ENCODE measurements at regions of chr5 and their contacts with region 1.

Region 1: GRCh38 chr5:110738812-110739651 is at the start of gene SLC25A46:
- DNase-seq: peak; percentile 92
- ATAC-seq: peak; percentile 89
- H3K4me3 Mint-ChIP-seq: peak within 1 kb of the TSS; percentile 87
- H3K27ac Mint-ChIP-seq: peak within 1 kb of the TSS; percentile 91
- H3K4me1 Mint-ChIP-seq: peaks cover 17% of the 10 kb centered on the region
- H3K27me3 Mint-ChIP-seq: peaks cover 4% of the 10 kb centered on the region
- total RNA-seq, gene SLC25A46: 32.3 to 35.3 TPM

Region 2: DNA sequence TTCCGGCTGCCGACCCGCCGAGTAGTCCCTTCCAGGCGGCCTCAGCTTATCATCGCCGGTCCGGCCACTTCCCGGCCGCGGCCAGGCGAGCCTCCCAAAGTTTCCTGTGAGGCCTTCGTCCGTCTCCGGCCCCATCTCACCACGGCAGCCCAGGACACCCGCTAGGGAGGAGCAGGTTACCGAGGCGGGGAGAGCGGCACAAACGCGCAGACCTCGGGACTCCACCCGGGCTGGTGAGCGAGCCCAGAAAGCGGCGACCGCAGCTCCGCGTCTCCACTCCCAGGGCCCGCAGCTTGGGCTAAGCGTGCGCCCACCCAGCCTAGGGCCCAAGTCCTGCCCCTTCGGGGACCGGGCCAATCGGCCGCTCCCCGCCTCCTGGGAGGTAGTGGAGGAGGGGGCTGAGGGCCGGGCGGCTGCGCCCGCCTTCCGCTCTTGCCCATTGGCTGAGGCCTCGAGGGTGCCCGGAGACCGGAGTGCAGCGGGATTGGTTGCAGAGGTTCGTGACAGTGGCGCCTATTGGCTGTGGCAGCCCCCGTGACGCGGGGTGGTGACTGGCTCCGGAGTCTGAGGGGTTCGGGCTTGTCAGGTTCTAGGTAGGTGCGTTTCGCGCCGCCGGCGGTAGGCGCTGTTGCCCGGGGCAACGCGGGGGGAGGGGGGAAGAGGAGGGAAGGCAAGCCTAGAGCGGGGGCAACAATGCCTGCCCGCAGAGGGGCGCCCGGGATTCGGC is 1990.5 kb before region 1 on chr5:
- CTCF ChIA-PET with region 1: no interaction called
- POLR2A ChIA-PET with region 1: no interaction called
- intact Hi-C with region 1: loop called in 1 of 2 experiments (anchors 5 kb)
- DNase-seq: peak; percentile 98
- ATAC-seq: peak; percentile 98
- H3K4me3 Mint-ChIP-seq: peak overlapping the region; percentile 75
- H3K27ac Mint-ChIP-seq: peak overlapping the region; percentile 89
- H3K4me1 Mint-ChIP-seq: peaks cover 18% of the 10 kb centered on the region
- H3K27me3 Mint-ChIP-seq: no peaks in the 10 kb centered on the region

Region 3: GRCh38 chr5:110726249-110727024 is 12.6 kb before region 1 on chr5 and contains the start of gene TMEM232:
- CTCF ChIA-PET with region 1: interaction called, 6 read pairs
- POLR2A ChIA-PET with region 1: no interaction called
- intact Hi-C with region 1: loop called (anchors 1 kb)
- DNase-seq: peak; percentile 87
- ATAC-seq: peak; percentile 100
- H3K4me3 Mint-ChIP-seq: peak within 1 kb of the TSS; percentile 65
- H3K27ac Mint-ChIP-seq: peak within 1 kb of the TSS; percentile 70
- H3K4me1 Mint-ChIP-seq: no peaks in the 10 kb centered on the region
- H3K27me3 Mint-ChIP-seq: no peaks in the 10 kb centered on the region
- total RNA-seq, gene TMEM232: 0.30 to 1.2 TPM

Region 4: DNA sequence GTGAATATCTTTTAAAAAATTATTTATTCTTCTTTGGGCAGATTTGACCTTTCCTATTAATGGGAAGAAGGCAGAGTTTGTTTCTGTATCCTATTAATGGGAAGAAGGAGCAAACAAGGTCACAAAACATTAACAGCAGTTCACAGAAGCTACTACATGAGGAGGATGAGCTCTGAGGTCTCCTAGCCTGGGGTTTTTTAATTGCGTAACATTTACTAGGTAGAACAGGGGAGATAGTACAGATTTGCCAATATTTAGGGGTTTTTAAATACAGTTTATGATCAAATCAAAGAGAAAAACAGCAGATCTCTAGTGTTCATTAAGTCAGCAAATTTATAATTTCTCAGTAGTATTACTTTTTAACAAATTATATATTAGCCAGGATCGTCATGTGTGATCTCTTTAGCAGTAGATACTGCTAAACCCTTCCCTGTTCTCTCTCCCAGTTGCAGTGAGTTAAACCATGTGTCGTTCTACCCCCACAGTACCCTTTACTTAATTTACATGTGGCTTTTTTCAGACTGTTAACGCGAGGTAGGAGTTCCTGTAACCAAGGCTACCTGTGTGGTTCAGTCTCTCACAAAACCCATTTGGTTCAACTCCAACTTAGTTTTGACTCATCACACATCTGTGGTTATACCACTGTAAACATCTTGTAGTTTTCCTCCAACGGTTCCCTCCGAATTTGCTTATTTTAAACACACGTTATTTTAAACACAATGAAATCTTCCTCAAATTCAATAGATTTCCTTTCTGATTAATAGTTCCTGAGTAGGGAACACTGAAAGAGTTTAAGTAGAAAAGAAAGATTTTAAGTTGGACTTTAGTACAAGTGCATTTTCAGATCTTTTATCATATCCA is 13.1 kb after region 1 on chr5:
- CTCF ChIA-PET with region 1: interaction called, 9 read pairs
- POLR2A ChIA-PET with region 1: no interaction called
- intact Hi-C with region 1: loop called (anchors 1 kb)
- DNase-seq: peak; percentile 49
- ATAC-seq: peak; percentile 92
- H3K4me3 Mint-ChIP-seq: peak overlapping the region; percentile 20
- H3K27ac Mint-ChIP-seq: peak overlapping the region; percentile 83
- H3K4me1 Mint-ChIP-seq: peaks cover 46% of the 10 kb centered on the region
- H3K27me3 Mint-ChIP-seq: no peaks in the 10 kb centered on the region

Region 5: GRCh38 chr5:111512375-111513130 is 773.5 kb after region 1 on chr5 and contains the start of gene STARD4:
- CTCF ChIA-PET with region 1: no interaction called
- POLR2A ChIA-PET with region 1: no interaction called
- intact Hi-C with region 1: loop called in 1 of 2 experiments (anchors 10 kb)
- DNase-seq: peak; percentile 97
- ATAC-seq: peak; percentile 94
- H3K4me3 Mint-ChIP-seq: peak within 1 kb of the TSS; percentile 99
- H3K27ac Mint-ChIP-seq: peak within 1 kb of the TSS; percentile 96
- H3K4me1 Mint-ChIP-seq: peaks cover 42% of the 10 kb centered on the region
- H3K27me3 Mint-ChIP-seq: no peaks in the 10 kb centered on the region
- total RNA-seq, gene STARD4: 54.2 to 55.3 TPM